ENCODE measurements at regions of chr3 and their contacts with region 1.

Region 1: DNA sequence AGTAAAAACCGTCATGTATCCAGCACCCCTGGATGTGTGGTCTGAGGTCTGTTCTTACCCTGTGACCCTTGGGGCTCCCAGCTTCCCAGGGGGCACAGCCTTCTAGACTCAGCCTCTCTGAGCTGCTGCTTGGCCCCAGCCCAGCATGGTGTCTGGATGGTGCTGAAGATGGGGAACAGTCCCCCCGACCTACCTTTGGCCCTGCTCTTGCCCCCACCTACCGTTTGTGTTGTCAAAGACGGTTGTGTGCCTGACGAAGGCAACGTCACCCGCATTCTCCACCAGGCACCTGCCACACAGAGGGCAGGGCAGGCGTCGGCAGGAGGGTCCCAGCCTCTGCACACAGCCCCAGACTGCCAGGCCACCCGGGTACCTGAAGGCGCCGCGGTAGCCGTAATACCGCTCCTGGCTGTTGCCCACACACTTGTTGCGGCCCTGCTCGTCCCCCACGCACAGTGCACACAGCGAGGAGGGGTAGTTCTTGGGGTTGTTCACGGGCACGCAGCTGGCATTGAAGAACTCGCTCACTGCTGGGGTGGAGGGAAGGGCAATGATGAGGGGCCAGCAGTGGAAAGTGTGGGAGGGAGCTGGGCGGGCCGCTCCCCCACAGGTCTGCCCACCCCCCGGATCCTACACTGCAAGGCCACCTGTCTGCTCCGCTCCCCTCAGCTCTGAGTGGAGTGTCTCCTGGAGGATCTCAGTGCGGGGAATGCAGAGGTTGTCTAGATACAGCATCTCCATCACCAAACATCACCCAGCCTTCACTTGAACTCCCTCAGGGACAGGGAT is 21.0 kb downstream of the MELTF start:
- DNase-seq: no peak
- H3K4me3 ChIP-seq: no peak overlapping the region
- H3K27ac ChIP-seq: no peak overlapping the region
- H3K4me1 ChIP-seq: peaks cover 0 to 9% (median 5%) of the 10 kb centered on the region in 4 donors
- H3K27me3 ChIP-seq: peaks cover 0 to 32% of the 10 kb centered on the region in 2 donors
- CTCF ChIP-seq: no peak

Region 2: GRCh38 chr3:196991581-196992490 is 16.8 kb before region 1 on chr3:
- intact Hi-C with region 1: loop called (anchors 2 kb)
- DNase-seq: peak in 1 of 2 donors; percentile 54
- H3K4me3 ChIP-seq: no peak overlapping the region
- H3K27ac ChIP-seq: no peak overlapping the region
- H3K4me1 ChIP-seq: no peaks in the 10 kb centered on the region
- H3K27me3 ChIP-seq: peaks cover 0 to 16% of the 10 kb centered on the region in 2 donors
- CTCF ChIP-seq: no peak

Measured in tibial artery (tissue), 4 donors.